Activated CD8-positive, alpha-beta memory T cell treated with anti-CD3 and anti-CD28 coated beads, Interleukin-2, amount 10 ng/mL, durations not matched to agents 7 days and 5 days (primary cell): ENCODE measurements at regions of chr2 and their contacts with region 1.

Region 1: DNA sequence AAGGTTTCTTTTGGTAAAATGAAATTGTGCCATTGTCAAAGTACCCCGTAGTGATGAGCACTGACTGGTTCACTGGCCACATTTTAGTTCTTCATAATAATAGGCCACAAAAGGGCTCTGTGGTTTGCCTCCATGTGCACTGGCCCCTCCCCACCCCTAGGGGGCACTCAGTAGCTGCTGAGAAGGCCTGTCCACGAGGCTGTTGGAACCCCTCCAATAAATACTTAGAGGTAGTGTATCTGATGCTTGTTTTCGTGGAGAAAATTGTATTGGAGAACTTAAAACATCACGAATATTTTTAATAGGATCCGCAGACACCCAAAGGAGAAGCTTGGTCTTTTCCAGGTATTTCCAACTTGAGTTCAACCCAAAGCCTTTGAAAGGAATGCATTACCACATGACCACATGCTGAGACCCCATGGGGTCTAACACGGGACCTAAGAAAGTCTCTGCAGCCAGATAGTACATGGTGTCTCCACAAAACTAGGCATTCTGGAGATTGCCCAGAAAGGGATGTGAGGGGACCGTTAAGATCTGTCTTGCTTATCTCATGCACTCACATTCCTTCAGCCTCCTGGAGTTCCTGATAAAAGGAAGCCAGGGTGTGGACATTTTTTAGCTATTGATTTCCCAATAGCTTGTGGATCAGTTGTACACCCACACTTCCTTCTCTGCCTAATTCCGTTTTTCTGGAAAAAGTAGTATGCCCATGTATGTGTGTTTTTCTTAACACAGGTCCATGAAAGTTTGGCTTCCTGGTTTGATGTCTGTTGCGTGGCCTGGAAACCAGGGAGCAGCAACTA is 28.5 kb upstream of the NOSTRIN start:
- DNase-seq: peak; percentile 66
- ATAC-seq: peak; percentile 63
- H3K4me3 Mint-ChIP-seq: no peak overlapping the region
- H3K27ac Mint-ChIP-seq: no peak overlapping the region
- H3K4me1 Mint-ChIP-seq: no peaks in the 10 kb centered on the region
- H3K27me3 Mint-ChIP-seq: peaks cover 6% of the 10 kb centered on the region

Region 2: GRCh38 chr2:168920504-168921157 is 146.7 kb after region 1 on chr2:
- CTCF ChIA-PET with region 1: interaction called, 15 read pairs
- DNase-seq: no peak
- ATAC-seq: no peak
- H3K4me3 Mint-ChIP-seq: no peak overlapping the region
- H3K27ac Mint-ChIP-seq: no peak overlapping the region
- H3K4me1 Mint-ChIP-seq: peaks cover 8% of the 10 kb centered on the region
- H3K27me3 Mint-ChIP-seq: peaks cover 34% of the 10 kb centered on the region